Heart right ventricle (tissue), 16 donors: ENCODE measurements at regions of chr5 and their contacts with region 1.

Region 1: DNA sequence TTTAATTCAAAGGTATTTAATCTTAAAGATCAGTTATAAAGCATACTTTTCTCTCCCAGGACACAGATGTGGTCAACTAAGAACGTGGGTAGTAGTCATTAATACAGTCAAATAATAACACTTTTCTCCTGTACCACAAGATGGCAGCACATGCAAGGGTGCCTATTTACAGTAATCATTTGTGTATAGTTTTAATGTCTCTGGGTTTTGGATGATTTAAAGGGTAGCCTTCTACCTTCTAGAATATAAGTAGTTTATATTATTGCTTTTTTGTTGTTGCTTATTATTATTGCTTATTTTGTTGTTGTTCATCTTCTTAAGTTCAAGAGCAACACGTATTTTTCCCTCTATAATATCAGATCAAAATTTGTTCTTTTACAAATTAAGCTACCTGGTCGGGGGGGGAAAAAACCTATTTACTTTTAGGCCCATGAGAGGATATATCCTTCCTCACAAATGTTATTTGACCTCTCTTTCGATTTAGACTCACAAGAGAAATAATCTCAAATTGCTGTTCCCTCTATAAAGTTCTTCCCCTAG is 59.6 kb upstream of the SLC27A6 start:
- DNase-seq: peak in 1 of 2 donors; percentile 38
- ATAC-seq: peak in 7 of 8 donors; percentile 55 to 85 (median 73)
- H3K4me3 ChIP-seq: no peak overlapping the region
- H3K27ac ChIP-seq: no peak overlapping the region
- H3K4me1 ChIP-seq: no peaks in the 10 kb centered on the region
- H3K27me3 ChIP-seq: no peaks in the 10 kb centered on the region
- CTCF ChIP-seq: peak; percentile 79 to 90 (median 84)

Region 2: GRCh38 chr5:128927644-128928043 is 22.0 kb after region 1 on chr5:
- intact Hi-C with region 1: no loop called
- DNase-seq: no peak
- ATAC-seq: peak in 1 of 8 donors; percentile 36
- H3K4me3 ChIP-seq: no peak overlapping the region
- H3K27ac ChIP-seq: no peak overlapping the region
- H3K4me1 ChIP-seq: peaks cover 0 to 11% (median 3%) of the 10 kb centered on the region in 9 donors
- H3K27me3 ChIP-seq: no peaks in the 10 kb centered on the region
- CTCF ChIP-seq: no peak

Region 3: DNA sequence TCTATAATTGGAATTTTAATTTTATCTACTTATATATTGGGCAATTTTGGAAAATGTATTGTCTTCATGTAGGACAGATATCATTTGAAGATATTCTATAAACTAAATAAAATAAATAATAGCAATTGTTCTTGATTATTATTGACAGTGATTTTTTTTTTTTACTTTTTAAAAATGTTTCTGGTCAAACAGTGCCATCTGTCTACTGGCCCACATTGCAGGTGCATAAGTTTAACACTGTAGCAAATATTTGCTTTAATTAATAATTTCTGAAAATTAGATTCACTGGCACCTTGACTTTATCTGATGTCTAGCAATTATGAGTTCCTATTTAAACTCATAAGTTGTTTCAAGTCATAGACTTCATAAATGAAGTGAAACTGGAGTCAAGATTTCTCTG is 147.8 kb after region 1 on chr5:
- intact Hi-C with region 1: loop called in 3 of 10 experiments (anchors 10 kb)
- DNase-seq: no peak
- ATAC-seq: no peak
- H3K4me3 ChIP-seq: no peak overlapping the region
- H3K27ac ChIP-seq: no peak overlapping the region
- H3K4me1 ChIP-seq: peaks cover 0 to 9% (median 0%) of the 10 kb centered on the region in 9 donors
- H3K27me3 ChIP-seq: no peaks in the 10 kb centered on the region
- CTCF ChIP-seq: peak in 4 of 9 donors; percentile 15 to 39 (median 18)

Region 4: GRCh38 chr5:129113871-129114270 is 208.2 kb after region 1 on chr5:
- intact Hi-C with region 1: loop called in 1 of 10 experiments (anchors 10 kb)
- DNase-seq: no peak
- ATAC-seq: no peak
- H3K4me3 ChIP-seq: no peak overlapping the region
- H3K27ac ChIP-seq: no peak overlapping the region
- H3K4me1 ChIP-seq: peaks cover 2 to 39% (median 17%) of the 10 kb centered on the region in 9 donors
- H3K27me3 ChIP-seq: no peaks in the 10 kb centered on the region
- CTCF ChIP-seq: peak in 3 of 9 donors; percentile 24 to 36 (median 33)

Region 5: DNA sequence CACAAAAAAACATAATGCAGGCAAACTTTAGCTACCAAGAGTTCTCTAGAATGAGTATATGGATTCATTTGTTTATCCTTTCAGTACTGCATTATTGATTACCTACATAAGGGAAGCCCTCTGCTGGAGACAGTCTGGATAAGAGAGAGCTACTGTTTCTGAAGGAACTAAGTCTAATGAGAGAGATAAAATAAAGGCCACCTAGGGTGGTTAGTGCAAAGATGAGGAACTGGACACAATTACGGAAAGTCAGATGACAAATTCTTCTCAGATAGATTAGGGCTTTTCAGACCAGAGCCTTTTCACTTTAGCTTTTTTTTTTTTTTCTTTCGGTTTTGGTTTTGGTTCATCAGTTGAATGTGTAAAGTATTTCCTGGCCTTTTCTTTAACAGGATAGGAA is 220.2 kb after region 1 on chr5:
- intact Hi-C with region 1: loop called in 5 of 10 experiments (anchors 10 kb)
- DNase-seq: no peak
- ATAC-seq: no peak
- H3K4me3 ChIP-seq: no peak overlapping the region
- H3K27ac ChIP-seq: peak overlapping the region in 4 of 10 donors; percentile 2 to 61 (median 16)
- H3K4me1 ChIP-seq: peaks cover 0 to 14% (median 3%) of the 10 kb centered on the region in 9 donors
- H3K27me3 ChIP-seq: no peaks in the 10 kb centered on the region
- CTCF ChIP-seq: peak in 3 of 9 donors; percentile 7 to 19 (median 17)

Region 6: DNA sequence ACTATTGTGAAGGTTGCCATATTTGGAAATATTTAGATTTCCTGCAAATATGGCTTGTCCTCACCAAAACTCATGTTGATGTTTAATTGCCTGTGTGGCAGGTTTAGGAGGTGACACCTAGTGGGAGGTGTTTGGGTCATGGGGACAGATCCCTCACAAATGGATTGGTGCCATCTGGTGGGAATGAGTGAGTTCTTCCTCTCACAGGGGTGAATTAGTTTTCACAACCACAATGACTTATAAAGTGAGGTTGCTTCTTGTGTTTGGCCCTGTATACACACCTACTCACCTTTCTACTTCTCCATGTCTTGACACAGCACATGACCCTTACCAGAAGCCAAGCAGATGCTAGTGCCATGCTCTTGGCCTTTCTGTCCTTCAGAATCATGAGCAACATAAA is 230.0 kb after region 1 on chr5:
- intact Hi-C with region 1: loop called in 2 of 10 experiments (anchors 5 to 10 kb)
- DNase-seq: no peak
- ATAC-seq: no peak
- H3K4me3 ChIP-seq: no peak overlapping the region
- H3K27ac ChIP-seq: no peak overlapping the region
- H3K4me1 ChIP-seq: no peaks in the 10 kb centered on the region
- H3K27me3 ChIP-seq: no peaks in the 10 kb centered on the region
- CTCF ChIP-seq: peak in 4 of 9 donors; percentile 20 to 36 (median 28)

Region 7: GRCh38 chr5:129271303-129271702 is 365.7 kb after region 1 on chr5:
- intact Hi-C with region 1: loop called in 1 of 10 experiments (anchors 10 kb)
- DNase-seq: no peak
- ATAC-seq: no peak
- H3K4me3 ChIP-seq: no peak overlapping the region
- H3K27ac ChIP-seq: no peak overlapping the region
- H3K4me1 ChIP-seq: no peaks in the 10 kb centered on the region
- H3K27me3 ChIP-seq: no peaks in the 10 kb centered on the region
- CTCF ChIP-seq: peak in 3 of 9 donors; percentile 9 to 16 (median 12)